Activated naive CD4-positive, alpha-beta T cell treated with anti-CD3 and anti-CD28 coated beads for 36 hours (primary cell): ENCODE measurements at regions of chr15 and their contacts with region 1.

Region 1: DNA sequence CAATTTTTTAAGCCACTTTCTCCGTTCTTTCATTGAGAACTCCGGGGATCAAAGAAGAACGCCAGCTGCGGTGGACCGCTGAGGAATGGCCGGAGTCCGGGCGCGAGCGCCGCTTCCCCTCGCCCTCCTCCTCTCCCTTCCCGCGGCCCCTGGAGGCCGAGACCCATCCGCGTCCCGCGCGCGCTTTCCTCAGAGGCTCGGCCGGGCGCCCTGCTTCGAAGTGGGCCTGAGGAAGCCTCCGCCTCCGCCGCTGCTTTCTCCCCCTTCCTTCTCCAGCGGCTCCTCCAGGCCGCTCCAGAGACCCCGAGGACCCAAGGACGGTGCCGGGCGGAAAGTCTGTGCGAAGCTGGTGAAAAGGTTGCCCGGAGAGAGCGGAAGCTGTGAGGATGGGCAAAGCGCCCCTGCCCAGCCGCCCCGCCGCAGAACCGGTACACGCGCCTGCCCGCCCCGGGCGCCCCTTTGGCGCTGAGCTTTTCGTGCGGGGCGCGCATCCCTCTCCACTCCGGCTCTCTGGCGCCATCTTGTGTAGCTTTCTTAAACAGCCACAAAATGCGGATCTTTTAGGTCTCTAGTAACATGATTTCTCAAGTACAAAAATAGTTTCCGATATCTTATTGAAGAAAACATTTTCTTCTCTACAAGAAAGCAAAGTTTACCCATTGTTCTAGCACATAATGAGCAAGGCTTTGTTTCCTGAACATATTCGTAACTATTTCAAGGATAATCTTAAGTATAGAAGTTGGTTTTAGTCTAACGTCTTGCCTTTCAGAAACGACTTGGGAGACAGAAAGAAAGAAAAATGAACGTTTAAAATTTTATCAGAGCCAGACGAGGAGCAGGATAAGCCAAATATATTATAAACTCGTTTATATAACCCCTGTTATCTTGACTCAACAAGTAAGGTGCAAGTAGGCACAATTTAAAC is 59.2 kb upstream of the FAM174B start:
- DNase-seq: peak; percentile 84
- H3K4me3 Mint-ChIP-seq: peak overlapping the region; percentile 46
- H3K27ac Mint-ChIP-seq: no peak overlapping the region
- H3K4me1 Mint-ChIP-seq: peaks cover 3% of the 10 kb centered on the region
- H3K27me3 Mint-ChIP-seq: peaks cover 4% of the 10 kb centered on the region

Region 2: DNA sequence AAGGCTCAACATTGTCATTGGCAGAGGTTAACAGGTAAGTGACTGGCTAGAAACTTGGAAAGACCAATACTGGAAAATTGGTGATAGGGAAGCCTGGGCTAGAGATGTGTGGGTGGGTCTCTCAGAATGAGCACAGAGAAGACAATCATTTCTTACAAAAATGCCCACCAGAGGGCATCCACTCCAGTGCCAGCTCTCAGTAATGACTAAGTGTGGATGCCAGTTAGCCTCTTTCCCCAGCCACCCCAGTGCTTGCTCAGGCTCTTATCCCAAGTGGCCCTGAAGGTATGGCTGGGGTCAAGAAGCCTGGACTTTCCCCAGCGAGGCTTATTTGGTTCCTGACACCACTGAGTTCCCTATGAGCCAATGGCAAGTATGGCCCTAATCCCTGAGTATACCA is 437.0 kb before region 1 on chr15:
- CTCF ChIA-PET with region 1: interaction called, 4 read pairs
- intact Hi-C with region 1: loop called (anchors 2 kb)
- DNase-seq: peak; percentile 30
- H3K4me3 Mint-ChIP-seq: no peak overlapping the region
- H3K27ac Mint-ChIP-seq: no peak overlapping the region
- H3K4me1 Mint-ChIP-seq: no peaks in the 10 kb centered on the region
- H3K27me3 Mint-ChIP-seq: peaks cover 10% of the 10 kb centered on the region

Region 3: DNA sequence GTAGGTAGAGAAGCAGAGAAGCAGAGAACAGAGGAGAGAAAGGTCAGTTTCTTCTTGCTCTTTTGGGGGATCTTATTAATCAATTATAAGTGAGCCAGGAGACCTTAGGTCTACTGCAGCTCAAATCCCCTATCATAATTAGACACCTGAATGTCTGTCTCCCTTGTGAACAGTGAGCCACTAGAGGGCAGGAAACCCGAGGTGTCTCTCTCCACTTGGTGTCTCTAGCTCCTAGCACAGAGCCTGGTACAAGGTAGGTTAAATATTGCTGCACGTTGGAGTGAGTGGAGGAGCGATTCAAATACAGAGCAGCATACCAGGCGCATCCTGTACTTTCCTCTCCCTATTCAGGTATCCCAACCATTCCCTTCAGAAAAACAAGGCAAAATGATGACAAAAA is 323.1 kb before region 1 on chr15:
- CTCF ChIA-PET with region 1: interaction called, 3 read pairs
- intact Hi-C with region 1: loop called (anchors 2 kb)
- DNase-seq: peak; percentile 56
- H3K4me3 Mint-ChIP-seq: no peak overlapping the region
- H3K27ac Mint-ChIP-seq: no peak overlapping the region
- H3K4me1 Mint-ChIP-seq: peaks cover 7% of the 10 kb centered on the region
- H3K27me3 Mint-ChIP-seq: peaks cover 60% of the 10 kb centered on the region

Region 4: DNA sequence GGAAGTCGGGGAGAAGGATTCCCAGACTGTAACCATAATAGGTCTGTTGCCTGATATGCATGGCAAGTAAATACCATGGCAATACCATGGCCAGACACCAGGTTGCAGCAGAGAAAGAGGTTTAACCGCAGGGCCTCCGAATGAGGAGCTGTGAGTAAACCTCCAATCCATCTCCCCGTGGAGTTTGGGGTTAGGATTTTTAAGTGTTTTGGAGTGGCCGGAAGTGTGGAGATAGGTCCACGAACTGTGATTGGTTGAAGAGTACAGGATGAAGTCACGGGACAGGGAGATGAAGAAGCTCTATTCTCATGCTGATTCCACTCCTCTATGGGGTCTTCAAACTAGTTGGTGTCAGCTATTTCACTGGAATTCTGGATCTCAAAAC is 193.1 kb before region 1 on chr15:
- CTCF ChIA-PET with region 1: interaction called, 36 read pairs
- intact Hi-C with region 1: loop called (anchors 1 kb)
- DNase-seq: peak; percentile 80
- H3K4me3 Mint-ChIP-seq: no peak overlapping the region
- H3K27ac Mint-ChIP-seq: no peak overlapping the region
- H3K4me1 Mint-ChIP-seq: peaks cover 1% of the 10 kb centered on the region
- H3K27me3 Mint-ChIP-seq: peaks cover under 1% of the 10 kb centered on the region

Region 5: DNA sequence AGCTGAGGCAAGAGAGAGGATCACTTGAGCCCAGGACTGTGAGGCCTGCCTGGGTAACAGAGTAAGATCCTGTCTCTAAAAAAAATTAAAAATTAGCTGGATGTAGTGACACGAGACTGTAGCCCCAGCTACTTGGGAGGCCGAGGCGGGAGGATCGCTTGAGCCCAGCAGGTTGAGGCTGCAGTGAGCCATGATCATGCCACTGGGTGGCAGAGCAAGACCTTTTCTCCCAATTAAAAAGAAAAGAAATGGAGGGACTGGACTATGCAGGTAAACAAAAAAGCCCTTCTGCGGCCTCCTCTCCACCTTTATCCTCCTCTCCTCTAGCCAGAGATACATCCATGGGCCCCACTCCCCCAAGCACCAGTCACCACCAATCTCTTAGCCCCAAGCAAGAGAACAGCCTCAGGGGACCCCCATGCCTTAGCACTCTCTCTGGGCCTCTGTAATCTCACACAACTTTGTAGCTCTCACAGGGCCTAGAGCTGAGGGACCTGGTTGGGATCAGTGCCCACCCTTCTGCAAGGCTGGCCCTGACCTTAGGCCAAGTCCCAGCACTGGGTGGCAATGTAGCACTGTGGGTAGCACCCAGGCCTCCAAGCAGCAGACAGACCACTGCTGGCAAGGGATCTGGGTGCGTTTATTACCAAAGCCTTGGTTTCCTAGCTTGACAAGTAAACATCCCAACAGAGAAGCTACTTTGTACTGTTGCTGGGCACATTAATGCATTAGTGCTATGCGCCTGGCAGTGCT is 102.6 kb before region 1 on chr15:
- CTCF ChIA-PET with region 1: interaction called, 15 read pairs
- intact Hi-C with region 1: loop called (anchors 1 kb)
- DNase-seq: peak; percentile 36
- H3K4me3 Mint-ChIP-seq: no peak overlapping the region
- H3K27ac Mint-ChIP-seq: no peak overlapping the region
- H3K4me1 Mint-ChIP-seq: no peaks in the 10 kb centered on the region
- H3K27me3 Mint-ChIP-seq: no peaks in the 10 kb centered on the region

Region 6: DNA sequence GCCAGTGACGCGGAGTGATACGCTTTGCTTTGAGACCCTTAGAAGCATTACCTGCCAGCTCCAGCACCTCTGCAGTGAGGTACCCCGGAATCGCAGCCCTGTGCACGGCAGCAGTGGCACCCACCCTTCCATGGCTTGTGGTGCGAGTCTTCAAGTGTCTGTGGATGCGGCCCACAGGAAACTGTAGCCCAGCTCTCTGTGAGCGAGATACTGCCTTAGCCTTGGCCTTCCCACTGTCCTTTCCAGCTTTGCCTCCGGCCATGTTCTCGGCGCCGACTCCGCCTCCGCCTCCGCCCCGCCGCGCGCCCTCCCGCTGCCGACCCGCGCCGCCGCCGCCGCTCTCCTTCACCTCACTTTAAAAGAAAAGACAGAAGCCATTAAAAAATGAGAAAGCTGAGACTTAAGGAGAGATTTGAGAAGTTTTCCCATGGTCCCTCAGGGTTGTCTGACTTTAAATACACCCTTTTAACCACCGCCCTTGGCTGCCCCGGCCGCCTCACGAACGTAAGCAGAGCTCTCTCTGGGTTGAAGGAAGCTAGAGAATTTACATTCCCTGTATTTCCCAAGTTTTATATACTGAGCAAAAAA is 19.3 kb after region 1 on chr15:
- CTCF ChIA-PET with region 1: interaction called, 10 read pairs
- intact Hi-C with region 1: no loop called
- DNase-seq: peak; percentile 33
- H3K4me3 Mint-ChIP-seq: peak overlapping the region; percentile 77
- H3K27ac Mint-ChIP-seq: no peak overlapping the region
- H3K4me1 Mint-ChIP-seq: peaks cover 9% of the 10 kb centered on the region
- H3K27me3 Mint-ChIP-seq: no peaks in the 10 kb centered on the region